Sciatic nerve (tissue), 2 donors: ENCODE measurements at regions of chr10 and their contacts with region 1.

Region 1: GRCh38 chr10:7671121-7671520 is 4.4 kb upstream of the ITIH5 start:
- DNase-seq: no peak
- ATAC-seq: no peak

Region 2: GRCh38 chr10:7610651-7611389 is 60.3 kb before region 1 on chr10:
- intact Hi-C with region 1: loop called (anchors 2 kb)
- DNase-seq: peak; percentile 64
- ATAC-seq: peak; percentile 91